ENCODE measurements at regions of chr7 and their contacts with region 1.

Region 1: DNA sequence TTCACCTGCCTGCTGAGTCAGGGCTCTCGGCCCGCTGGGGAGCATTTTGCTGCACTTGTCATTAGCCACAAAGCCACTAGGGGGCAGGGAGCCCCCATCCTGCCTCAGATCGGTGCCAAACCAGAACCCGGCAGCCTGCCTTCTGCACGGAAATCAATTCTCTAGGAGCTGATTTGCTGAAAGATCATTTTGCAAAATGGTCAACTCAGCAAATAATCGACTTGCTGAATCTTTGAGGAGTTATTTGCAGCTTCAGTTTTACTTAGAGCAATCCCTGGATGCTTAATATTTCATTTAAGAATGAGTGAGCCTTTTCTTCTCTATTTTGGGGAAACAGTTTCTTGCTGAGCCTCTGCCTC is 1.7 kb upstream of the GIMAP8 start:
- DNase-seq: peak; percentile 47 to 91
- H3K4me3 ChIP-seq: no peak overlapping the region
- H3K27ac ChIP-seq: no peak overlapping the region
- H3K4me1 ChIP-seq: peaks cover 3 to 7% (median 3%) of the 10 kb centered on the region in 4 experiments; a peak in 5 of 7 replicates
- H3K27me3 ChIP-seq: peaks cover 0 to 12% (median 4%) of the 10 kb centered on the region in 4 experiments; a peak in 4 of 7 replicates
- CTCF ChIP-seq: peak; percentile 91 to 97 (median 95)
- EP300 ChIP-seq: no peak
- POLR2A ChIP-seq: no peak
- RAD21 ChIP-seq: peak; percentile 98 to 100

Region 2: GRCh38 chr7:150463461-150463860 is 14.7 kb after region 1 on chr7:
- CTCF ChIA-PET with region 1: interaction called, 12 read pairs
- POLR2A ChIA-PET with region 1: no interaction called
- DNase-seq: no peak
- H3K4me3 ChIP-seq: no peak overlapping the region
- H3K27ac ChIP-seq: no peak overlapping the region
- H3K4me1 ChIP-seq: no peaks in the 10 kb centered on the region
- H3K27me3 ChIP-seq: peaks cover 0 to 2% (median 0%) of the 10 kb centered on the region in 4 experiments; a peak in 1 of 7 replicates
- CTCF ChIP-seq: no peak
- EP300 ChIP-seq: no peak
- POLR2A ChIP-seq: no peak
- RAD21 ChIP-seq: no peak

Region 3: DNA sequence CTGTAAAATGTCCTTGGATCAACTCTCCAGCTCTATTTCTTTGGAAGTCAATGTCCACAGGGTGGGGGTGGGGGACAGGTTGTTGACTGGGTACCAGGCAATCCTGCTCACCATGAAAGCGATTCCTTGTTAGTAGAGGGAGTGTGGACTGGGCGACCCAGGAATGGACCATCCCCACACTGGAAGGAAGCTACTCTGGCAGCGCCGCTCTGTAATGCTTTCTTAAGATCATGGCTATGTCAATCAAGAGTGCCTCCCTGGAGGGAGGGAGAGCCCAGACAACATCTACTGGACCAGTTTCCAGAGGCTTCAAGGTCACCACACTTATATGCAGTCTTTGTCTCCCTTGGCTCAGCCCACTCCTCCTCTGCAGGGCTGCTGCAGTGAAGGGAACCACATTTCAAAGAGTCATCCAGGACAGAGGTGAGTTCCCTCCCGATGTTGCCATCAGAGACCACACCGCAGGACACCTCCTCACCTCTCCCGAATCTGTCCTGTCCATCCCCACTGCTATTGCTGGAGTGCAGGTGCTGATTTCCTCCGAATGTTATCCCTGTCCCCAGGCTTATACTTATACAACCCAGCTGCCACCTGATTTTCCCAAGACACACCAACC is 295.4 kb after region 1 on chr7:
- CTCF ChIA-PET with region 1: interaction called, 11 read pairs
- POLR2A ChIA-PET with region 1: no interaction called
- DNase-seq: no peak
- H3K4me3 ChIP-seq: no peak overlapping the region
- H3K27ac ChIP-seq: no peak overlapping the region
- H3K4me1 ChIP-seq: no peaks in the 10 kb centered on the region
- H3K27me3 ChIP-seq: peaks cover 48 to 93% (median 81%) of the 10 kb centered on the region in 4 experiments
- CTCF ChIP-seq: no peak
- EP300 ChIP-seq: no peak
- POLR2A ChIP-seq: no peak
- RAD21 ChIP-seq: no peak

Region 4: DNA sequence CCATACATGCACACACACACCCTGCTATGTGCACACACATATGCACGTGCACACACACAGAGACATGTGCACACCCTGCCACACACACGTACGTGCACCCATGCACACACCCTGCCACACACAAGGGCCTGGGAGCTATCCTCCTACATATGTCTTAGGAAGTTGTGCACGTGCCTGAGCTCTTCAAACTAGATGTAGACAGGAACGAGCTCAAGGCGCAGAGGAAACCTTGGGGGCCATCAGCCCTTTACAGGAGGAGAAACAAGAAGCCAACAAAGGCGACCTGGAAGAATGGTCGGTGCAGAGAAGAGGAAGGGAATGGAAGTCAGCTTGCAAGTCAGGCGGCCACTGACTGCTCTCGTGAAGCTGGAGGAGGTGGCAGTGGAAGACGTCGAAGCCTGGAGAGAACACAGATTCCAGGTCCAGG is 462.2 kb after region 1 on chr7:
- CTCF ChIA-PET with region 1: no interaction called
- POLR2A ChIA-PET with region 1: no interaction called
- DNase-seq: no peak
- H3K4me3 ChIP-seq: no peak overlapping the region
- H3K27ac ChIP-seq: no peak overlapping the region
- H3K4me1 ChIP-seq: peaks cover 0 to 8% (median 0%) of the 10 kb centered on the region in 4 experiments; a peak in 2 of 7 replicates
- H3K27me3 ChIP-seq: no peaks in the 10 kb centered on the region
- CTCF ChIP-seq: no peak
- EP300 ChIP-seq: no peak
- POLR2A ChIP-seq: no peak
- RAD21 ChIP-seq: no peak